Activated naive CD4-positive, alpha-beta T cell treated with anti-CD3 and anti-CD28 coated beads, Interleukin-2, amount 10 ng/mL, durations not matched to agents 7 days and 5 days (primary cell): ENCODE measurements at regions of chr15 and their contacts with region 1.

Region 1: DNA sequence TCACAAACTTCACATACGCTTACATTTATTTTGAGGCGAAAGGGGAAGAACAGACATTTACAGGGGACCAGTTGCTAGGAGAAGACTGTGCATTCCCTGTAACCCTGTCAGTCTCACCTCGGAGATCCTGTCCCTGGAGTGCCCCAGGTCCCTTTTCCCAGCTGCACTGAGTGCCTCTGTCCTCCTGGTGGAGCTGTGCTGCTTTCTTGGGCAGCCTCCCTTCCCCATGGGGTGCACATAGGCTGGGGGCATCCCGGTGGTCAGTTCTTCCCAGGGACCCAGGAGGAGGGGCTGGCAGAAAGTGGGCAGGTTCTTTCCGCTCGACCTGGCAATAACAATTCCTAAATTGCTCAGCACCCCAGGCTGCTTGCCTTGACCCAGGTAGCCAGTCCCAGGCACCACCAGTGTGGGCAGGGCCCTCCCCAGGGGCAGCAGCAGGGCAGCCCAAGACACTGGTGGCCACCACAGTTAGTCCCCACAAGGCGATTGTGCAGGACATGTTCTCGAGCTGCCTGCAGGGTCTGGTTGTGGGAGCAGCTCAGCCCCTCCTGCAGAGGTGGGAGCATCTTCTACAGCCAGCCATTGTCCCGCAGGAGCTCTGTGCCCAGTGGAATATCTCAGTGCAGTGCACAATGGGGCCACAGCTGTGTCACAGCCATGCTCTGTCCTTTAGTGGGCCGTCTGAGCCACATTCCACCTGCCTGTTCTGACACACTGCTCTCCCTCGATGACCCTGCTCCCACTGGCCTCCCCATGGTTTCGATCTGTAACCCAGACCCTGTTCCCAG is 36.3 kb downstream of the APBA2 start:
- DNase-seq: no peak
- H3K4me3 Mint-ChIP-seq: no peak overlapping the region
- H3K27ac Mint-ChIP-seq: peak overlapping the region; percentile 42
- H3K4me1 Mint-ChIP-seq: peaks cover 55% of the 10 kb centered on the region
- H3K27me3 Mint-ChIP-seq: peaks cover 3% of the 10 kb centered on the region

Region 2: GRCh38 chr15:28901987-28902745 is 19.9 kb before region 1 on chr15:
- CTCF ChIA-PET with region 1: no interaction called
- DNase-seq: no peak
- H3K4me3 Mint-ChIP-seq: no peak overlapping the region
- H3K27ac Mint-ChIP-seq: no peak overlapping the region
- H3K4me1 Mint-ChIP-seq: peaks cover 20% of the 10 kb centered on the region
- H3K27me3 Mint-ChIP-seq: peaks cover 10% of the 10 kb centered on the region

Region 3: DNA sequence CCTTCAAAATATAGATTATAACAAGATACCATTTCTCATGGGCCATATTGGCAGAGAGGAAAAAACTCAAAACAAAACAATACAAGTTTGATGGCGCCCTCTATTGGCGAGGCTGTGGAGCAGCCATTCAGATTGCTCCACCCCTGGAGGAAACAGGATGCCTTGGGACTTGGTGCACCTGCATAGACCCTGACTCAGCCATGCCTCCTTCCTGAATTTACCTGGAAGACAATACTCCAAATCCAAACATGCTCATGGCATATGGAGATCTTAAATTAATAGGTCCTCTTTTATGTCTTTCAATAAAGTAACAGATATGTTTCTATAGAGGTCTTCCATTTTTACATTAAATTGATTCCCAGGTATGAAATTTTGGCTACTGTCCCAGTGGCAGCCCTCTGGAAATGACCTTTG is 53.7 kb after region 1 on chr15:
- CTCF ChIA-PET with region 1: interaction called, 14 read pairs
- DNase-seq: peak; percentile 81
- H3K4me3 Mint-ChIP-seq: no peak overlapping the region
- H3K27ac Mint-ChIP-seq: no peak overlapping the region
- H3K4me1 Mint-ChIP-seq: peaks cover 14% of the 10 kb centered on the region
- H3K27me3 Mint-ChIP-seq: no peaks in the 10 kb centered on the region